ENCODE measurements at regions of chr19 and their contacts with region 1.

Region 1: GRCh38 chr19:48637170-48637947 is at the start of gene DBP:
- DNase-seq: peak; percentile 98 to 100
- H3K4me3 ChIP-seq: peak within 1 kb of the TSS; percentile 66 to 89
- H3K27ac ChIP-seq: peak within 1 kb of the TSS; percentile 94 to 99
- H3K4me1 ChIP-seq: peaks cover 19 to 39% of the 10 kb centered on the region in 2 donors
- H3K27me3 ChIP-seq: no peaks in the 10 kb centered on the region
- CTCF ChIP-seq: no peak
- total RNA-seq, gene DBP: 0.21 TPM

Region 2: GRCh38 chr19:48596679-48597465 is 40.5 kb before region 1 on chr19:
- intact Hi-C with region 1: no loop called
- DNase-seq: no peak
- H3K4me3 ChIP-seq: no peak overlapping the region
- H3K27ac ChIP-seq: no peak overlapping the region
- H3K4me1 ChIP-seq: no peaks in the 10 kb centered on the region
- H3K27me3 ChIP-seq: no peaks in the 10 kb centered on the region
- CTCF ChIP-seq: no peak

Region 3: DNA sequence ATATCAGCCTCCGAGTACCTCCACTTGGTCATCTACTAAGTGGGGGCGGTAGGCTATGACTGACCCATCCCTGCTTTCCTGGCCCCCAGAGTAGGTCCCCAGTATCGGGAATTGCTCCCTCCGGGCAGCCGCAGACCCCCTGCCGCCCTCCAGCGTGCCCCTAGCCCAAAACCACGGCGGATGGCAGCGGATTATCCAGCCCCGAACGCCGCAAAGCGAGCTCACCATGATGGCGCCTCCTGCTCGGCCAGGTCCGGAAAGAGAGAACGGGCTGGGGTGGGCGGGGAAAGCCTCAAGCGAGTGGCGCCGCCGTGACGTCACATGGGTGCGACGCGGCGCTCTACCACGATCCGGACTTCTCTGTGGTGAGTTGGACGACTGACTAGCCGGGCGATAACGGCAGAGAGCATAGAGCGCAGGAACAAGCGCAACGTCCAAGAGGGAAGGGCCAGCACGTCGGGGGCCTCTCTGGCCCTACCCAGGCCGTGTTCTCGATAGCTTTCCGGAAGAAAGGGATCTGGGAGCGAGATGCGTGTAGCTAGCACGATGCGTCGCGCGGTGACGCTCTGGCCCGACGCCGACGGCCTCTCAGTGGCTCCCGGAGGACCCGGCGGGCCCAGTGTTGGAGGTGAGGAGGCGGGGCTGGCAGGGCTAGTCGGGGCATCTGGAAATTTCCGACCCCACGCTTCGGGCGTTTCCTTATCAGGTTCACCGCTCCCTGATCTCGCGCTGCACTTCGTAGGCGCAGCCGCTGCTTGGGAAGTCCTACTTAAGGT is 18.3 kb before region 1 on chr19 and contains the starts of genes RPL18 and SPHK2:
- intact Hi-C with region 1: loop called (anchors 1 kb)
- DNase-seq: peak; percentile 94 to 99
- H3K4me3 ChIP-seq: peak within 1 kb of the TSS; percentile 68 to 95
- H3K27ac ChIP-seq: peak within 1 kb of the TSS; percentile 86 to 87
- H3K4me1 ChIP-seq: peaks cover 16 to 27% of the 10 kb centered on the region in 2 donors
- H3K27me3 ChIP-seq: no peaks in the 10 kb centered on the region
- CTCF ChIP-seq: no peak
- total RNA-seq, gene RPL18: 2,223 TPM
- total RNA-seq, gene SPHK2: 35.3 TPM

Region 4: GRCh38 chr19:48624067-48624594 is 13.2 kb before region 1 on chr19:
- intact Hi-C with region 1: loop called (anchors 1 kb)
- DNase-seq: peak; percentile 88 to 99
- H3K4me3 ChIP-seq: peak overlapping the region; percentile 44 to 73
- H3K27ac ChIP-seq: peak overlapping the region; percentile 60 to 82
- H3K4me1 ChIP-seq: peaks cover 11 to 21% of the 10 kb centered on the region in 2 donors
- H3K27me3 ChIP-seq: no peaks in the 10 kb centered on the region
- CTCF ChIP-seq: no peak

Region 5: GRCh38 chr19:48654299-48655059 is 17.1 kb after region 1 on chr19:
- intact Hi-C with region 1: no loop called
- DNase-seq: no peak
- H3K4me3 ChIP-seq: no peak overlapping the region
- H3K27ac ChIP-seq: no peak overlapping the region
- H3K4me1 ChIP-seq: no peaks in the 10 kb centered on the region
- H3K27me3 ChIP-seq: no peaks in the 10 kb centered on the region
- CTCF ChIP-seq: no peak

Region 6: DNA sequence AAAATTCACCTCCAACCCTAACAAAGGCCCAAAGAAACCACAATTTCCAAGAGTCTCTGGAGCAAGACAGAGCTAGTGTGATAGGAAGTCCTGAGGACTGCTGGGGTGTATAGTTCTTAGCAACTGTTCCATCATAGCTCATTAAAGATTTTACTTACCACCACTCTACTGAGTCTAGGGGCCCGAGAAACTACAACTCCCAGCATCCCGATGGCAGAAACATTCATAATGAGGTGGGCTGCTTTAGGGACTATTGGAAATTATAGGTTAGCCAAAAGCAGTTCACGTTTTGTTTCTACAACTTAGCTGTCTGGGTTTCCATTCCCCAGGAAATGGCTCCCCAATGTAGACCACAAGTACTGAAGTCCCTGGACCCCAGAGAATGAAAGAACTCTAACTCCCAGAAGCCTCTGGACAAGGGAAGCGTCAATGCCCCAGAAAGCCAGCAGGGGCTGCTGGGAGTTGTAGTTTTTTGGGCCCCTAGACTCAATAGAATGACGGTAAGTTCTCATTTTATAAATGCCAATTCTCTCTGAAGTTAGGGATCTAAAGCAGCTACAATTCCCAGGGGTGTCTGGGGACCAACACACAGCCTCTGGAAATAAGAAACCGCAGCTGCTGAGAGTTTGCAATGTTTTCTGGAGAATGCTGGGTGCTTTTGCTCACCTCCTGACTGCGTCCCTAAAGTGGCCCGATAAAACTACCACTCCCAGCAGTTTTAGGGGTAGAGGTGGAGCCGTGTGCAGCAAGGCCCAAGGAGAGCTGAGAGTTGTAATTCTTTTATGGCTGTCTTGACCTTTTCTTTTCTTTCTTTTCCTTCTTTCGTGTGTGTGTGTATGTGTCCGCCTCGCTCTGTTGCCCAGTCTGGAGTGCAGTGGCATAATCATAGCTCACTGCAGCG is 338.8 kb after region 1 on chr19:
- intact Hi-C with region 1: loop called (anchors 5 kb)
- DNase-seq: no peak
- H3K4me3 ChIP-seq: no peak overlapping the region
- H3K27ac ChIP-seq: peak overlapping the region; percentile 14 to 93
- H3K4me1 ChIP-seq: peaks cover 0 to 15% of the 10 kb centered on the region in 2 donors
- H3K27me3 ChIP-seq: no peaks in the 10 kb centered on the region
- CTCF ChIP-seq: no peak

Region 7: GRCh38 chr19:49363268-49364082 is 726.1 kb after region 1 on chr19 and contains the start of gene DKKL1:
- intact Hi-C with region 1: loop called (anchors 5 kb)
- DNase-seq: peak; percentile 98 to 99
- H3K4me3 ChIP-seq: peak within 1 kb of the TSS; percentile 45 to 76
- H3K27ac ChIP-seq: peak within 1 kb of the TSS; percentile 88 to 89
- H3K4me1 ChIP-seq: peaks cover 0 to 7% of the 10 kb centered on the region in 2 donors
- H3K27me3 ChIP-seq: no peaks in the 10 kb centered on the region
- CTCF ChIP-seq: no peak
- total RNA-seq, gene DKKL1: not detected

Region 8: GRCh38 chr19:49850473-49851342 is 1213.3 kb after region 1 on chr19 and contains the start of gene PTOV1:
- intact Hi-C with region 1: loop called (anchors 10 kb)
- DNase-seq: peak; percentile 51 to 96
- H3K4me3 ChIP-seq: peak within 1 kb of the TSS; percentile 85 to 90
- H3K27ac ChIP-seq: peak within 1 kb of the TSS; percentile 99 to 100
- H3K4me1 ChIP-seq: peaks cover 4 to 10% of the 10 kb centered on the region in 2 donors
- H3K27me3 ChIP-seq: no peaks in the 10 kb centered on the region
- CTCF ChIP-seq: peak in 1 of 3 experiments; percentile 4
- total RNA-seq, gene PTOV1: 163 TPM